ENCODE measurements at regions of chr4 and their contacts with region 1.

Region 1: DNA sequence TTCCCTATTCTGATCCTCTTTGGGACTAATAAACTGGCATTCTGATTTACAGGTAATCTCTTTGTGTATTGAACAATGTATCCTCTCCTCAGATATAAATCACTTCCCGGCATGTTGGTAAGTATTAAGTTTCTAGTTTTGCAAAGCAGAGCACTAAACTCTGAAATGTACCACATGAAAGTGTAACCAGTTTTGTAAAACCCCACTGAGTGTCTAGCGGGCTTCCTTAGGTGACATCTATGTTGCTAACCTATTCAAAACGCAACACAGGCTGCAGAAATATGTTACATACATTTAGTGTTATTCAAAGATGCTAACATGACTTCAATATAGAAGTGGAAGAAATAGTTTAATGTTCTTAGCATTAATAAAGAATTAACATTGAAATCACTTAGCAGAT is 25.2 kb downstream of the DNAJB14 start:
- DNase-seq: peak in 7 of 9 donors; percentile 8 to 59 (median 34)
- ATAC-seq: peak; percentile 89
- H3K4me3 ChIP-seq: no peak overlapping the region
- H3K4me3 Mint-ChIP-seq: peak overlapping the region; percentile 1 to 67 (median 42)
- H3K27ac ChIP-seq: no peak overlapping the region
- H3K27ac Mint-ChIP-seq: peak overlapping the region; percentile 62 to 88 (median 78)
- H3K4me1 ChIP-seq: peaks cover 0 to 4% of the 10 kb centered on the region in 2 donors
- H3K4me1 Mint-ChIP-seq: peaks cover 13 to 51% (median 22%) of the 10 kb centered on the region in 7 donors
- H3K27me3 ChIP-seq: no peaks in the 10 kb centered on the region
- H3K27me3 Mint-ChIP-seq: no peaks in the 10 kb centered on the region

Region 2: DNA sequence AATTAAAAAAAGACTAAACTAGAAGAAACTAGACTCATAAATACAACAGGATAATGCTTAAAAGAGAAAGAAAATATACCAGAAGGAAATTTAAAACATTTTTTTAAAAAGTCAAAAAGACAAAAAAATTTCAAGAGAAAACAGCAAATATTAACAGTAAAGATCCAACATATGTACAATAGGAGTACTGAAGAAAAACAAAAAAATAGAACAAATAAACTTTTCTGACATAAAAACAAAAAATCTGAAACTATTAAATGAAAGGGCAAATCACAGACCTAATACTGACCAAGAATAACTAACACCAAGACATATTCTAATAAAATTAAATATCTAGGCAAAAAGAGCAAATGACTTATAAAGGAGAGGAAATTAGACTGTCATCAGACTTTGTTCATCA is 13.7 kb after region 1 on chr4:
- CTCF ChIA-PET with region 1: interaction called, 5 read pairs
- POLR2A ChIA-PET with region 1: interaction called, 3 read pairs
- intact Hi-C with region 1: loop called in 1 of 2 experiments (anchors 2 kb)
- DNase-seq: no peak
- ATAC-seq: no peak
- H3K4me3 ChIP-seq: no peak overlapping the region
- H3K4me3 Mint-ChIP-seq: peak overlapping the region in 2 of 10 donors; percentile 22 to 42
- H3K27ac ChIP-seq: no peak overlapping the region
- H3K27ac Mint-ChIP-seq: peak overlapping the region in 3 of 9 donors; percentile 20 to 75 (median 55)
- H3K4me1 ChIP-seq: peaks cover 4% of the 10 kb centered on the region in 2 donors
- H3K4me1 Mint-ChIP-seq: peaks cover 22 to 61% (median 53%) of the 10 kb centered on the region in 7 donors
- H3K27me3 ChIP-seq: no peaks in the 10 kb centered on the region
- H3K27me3 Mint-ChIP-seq: no peaks in the 10 kb centered on the region

Region 3: GRCh38 chr4:99968330-99968729 is 47.2 kb after region 1 on chr4:
- CTCF ChIA-PET with region 1: no interaction called
- POLR2A ChIA-PET with region 1: no interaction called
- intact Hi-C with region 1: no loop called
- DNase-seq: no peak
- ATAC-seq: no peak
- H3K4me3 ChIP-seq: no peak overlapping the region
- H3K4me3 Mint-ChIP-seq: no peak overlapping the region
- H3K27ac ChIP-seq: no peak overlapping the region
- H3K27ac Mint-ChIP-seq: no peak overlapping the region
- H3K4me1 ChIP-seq: peaks cover 0 to 5% of the 10 kb centered on the region in 2 donors
- H3K4me1 Mint-ChIP-seq: peaks cover 10 to 29% (median 22%) of the 10 kb centered on the region in 7 donors
- H3K27me3 ChIP-seq: no peaks in the 10 kb centered on the region
- H3K27me3 Mint-ChIP-seq: peaks cover 4 to 28% (median 6%) of the 10 kb centered on the region in 5 donors

Measured in naive thymus-derived CD4-positive, alpha-beta T cell (primary cell).